ENCODE measurements at regions of chr6 and their contacts with region 1.

Region 1: GRCh38 chr6:27132532-27133280 is 114.8 kb upstream of the PRSS16 start:
- DNase-seq: peak; percentile 99
- ATAC-seq: peak; percentile 72
- H3K4me3 ChIP-seq: peak overlapping the region; percentile 82
- H3K27ac ChIP-seq: peak overlapping the region; percentile 95
- H3K4me1 ChIP-seq: peaks cover 32% of the 10 kb centered on the region
- H3K27me3 ChIP-seq: no peaks in the 10 kb centered on the region
- CTCF ChIP-seq: no peak

Region 2: DNA sequence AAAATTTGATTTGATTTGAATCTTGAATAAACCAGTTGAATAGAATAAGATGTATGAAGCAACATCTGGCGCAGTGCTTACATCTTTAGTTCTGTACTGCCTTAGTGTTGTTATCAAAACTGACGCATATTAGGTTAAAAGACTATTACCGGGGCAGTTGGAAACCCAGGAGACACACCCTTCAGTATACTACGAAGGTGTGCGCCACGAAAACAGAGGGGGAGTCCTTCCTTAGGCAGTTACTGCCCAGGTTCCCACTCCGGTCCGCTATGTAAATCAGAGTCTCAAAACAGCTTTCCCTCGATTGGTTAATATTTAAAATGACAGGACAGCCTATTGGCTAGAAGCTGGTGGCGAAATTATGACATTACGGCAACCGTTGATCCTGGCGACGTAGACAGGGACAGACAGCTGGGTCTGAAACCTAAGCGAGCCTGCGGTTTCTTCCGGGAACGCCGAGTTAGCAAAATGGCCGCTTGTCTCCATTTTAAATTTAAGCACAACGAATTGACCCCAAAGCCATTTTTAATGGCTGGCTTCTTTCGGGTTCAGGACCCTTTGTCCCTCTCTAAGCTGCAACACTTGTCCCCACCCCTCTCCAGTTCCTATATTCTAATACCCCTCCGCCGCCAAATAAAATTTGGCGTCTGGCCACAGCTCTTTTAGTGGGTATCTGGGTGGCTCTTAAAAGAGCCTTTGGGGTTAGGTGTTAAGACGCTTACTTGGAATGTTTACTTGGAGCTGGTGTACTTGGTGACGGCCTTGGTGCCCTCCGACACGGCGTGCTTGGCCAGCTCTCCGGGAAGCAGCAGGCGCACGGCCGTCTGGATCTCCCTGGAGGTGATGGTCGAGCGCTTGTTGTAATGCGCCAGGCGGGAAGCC is 1009.7 kb before region 1 on chr6:
- CTCF ChIA-PET with region 1: no interaction called
- POLR2A ChIA-PET with region 1: interaction called, 3 read pairs
- intact Hi-C with region 1: loop called (anchors 2 kb)
- DNase-seq: peak; percentile 99
- ATAC-seq: peak; percentile 50
- H3K4me3 ChIP-seq: peak overlapping the region; percentile 96
- H3K27ac ChIP-seq: peak overlapping the region; percentile 94
- H3K4me1 ChIP-seq: peaks cover 49% of the 10 kb centered on the region
- H3K27me3 ChIP-seq: no peaks in the 10 kb centered on the region
- CTCF ChIP-seq: no peak

Region 3: DNA sequence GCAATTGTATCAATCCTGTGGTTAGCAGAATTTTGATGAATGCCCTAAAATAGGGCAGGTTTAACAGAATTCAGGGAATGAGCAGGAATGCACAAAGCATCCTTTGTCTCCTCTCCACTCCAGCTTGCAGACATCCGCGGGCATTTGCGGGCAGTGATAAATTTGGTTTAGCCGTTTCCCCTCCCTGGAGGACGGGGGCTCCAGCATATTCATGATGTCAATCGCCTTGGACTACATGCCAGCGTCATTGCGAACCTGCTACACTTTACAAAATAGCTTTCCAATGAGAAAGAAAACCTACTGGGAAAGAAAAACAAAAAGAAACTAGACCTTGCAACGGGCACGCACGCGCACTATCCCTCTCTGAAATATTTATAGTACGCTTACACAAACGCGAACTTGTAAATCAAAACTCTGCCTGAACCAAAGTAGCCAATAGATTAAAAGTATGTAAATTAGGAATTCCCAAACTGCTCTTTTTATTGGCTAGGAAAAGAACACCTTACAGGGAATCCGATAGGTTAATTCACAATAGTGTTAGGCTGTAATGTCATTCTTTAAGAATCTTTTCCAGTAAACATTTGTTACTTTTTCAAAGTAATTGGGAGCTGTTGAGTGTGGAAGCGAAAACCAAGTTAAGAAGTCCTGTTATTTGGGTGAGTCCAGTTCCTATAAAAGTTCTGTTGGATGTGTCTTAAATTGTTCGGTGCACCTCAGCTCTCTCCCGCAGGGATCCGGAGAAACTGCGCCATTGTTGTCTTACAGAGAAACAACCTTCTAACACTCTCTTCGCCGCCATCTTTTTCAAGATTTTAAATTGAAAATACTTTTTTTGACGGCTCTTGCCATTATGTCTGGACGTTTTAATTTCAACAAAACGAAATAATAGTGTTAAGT is 908.8 kb before region 1 on chr6:
- CTCF ChIA-PET with region 1: no interaction called
- POLR2A ChIA-PET with region 1: no interaction called
- intact Hi-C with region 1: loop called (anchors 5 kb)
- DNase-seq: peak; percentile 93
- ATAC-seq: peak; percentile 85
- H3K4me3 ChIP-seq: peak overlapping the region; percentile 83
- H3K27ac ChIP-seq: peak overlapping the region; percentile 91
- H3K4me1 ChIP-seq: peaks cover 23% of the 10 kb centered on the region
- H3K27me3 ChIP-seq: no peaks in the 10 kb centered on the region
- CTCF ChIP-seq: no peak

Region 4: DNA sequence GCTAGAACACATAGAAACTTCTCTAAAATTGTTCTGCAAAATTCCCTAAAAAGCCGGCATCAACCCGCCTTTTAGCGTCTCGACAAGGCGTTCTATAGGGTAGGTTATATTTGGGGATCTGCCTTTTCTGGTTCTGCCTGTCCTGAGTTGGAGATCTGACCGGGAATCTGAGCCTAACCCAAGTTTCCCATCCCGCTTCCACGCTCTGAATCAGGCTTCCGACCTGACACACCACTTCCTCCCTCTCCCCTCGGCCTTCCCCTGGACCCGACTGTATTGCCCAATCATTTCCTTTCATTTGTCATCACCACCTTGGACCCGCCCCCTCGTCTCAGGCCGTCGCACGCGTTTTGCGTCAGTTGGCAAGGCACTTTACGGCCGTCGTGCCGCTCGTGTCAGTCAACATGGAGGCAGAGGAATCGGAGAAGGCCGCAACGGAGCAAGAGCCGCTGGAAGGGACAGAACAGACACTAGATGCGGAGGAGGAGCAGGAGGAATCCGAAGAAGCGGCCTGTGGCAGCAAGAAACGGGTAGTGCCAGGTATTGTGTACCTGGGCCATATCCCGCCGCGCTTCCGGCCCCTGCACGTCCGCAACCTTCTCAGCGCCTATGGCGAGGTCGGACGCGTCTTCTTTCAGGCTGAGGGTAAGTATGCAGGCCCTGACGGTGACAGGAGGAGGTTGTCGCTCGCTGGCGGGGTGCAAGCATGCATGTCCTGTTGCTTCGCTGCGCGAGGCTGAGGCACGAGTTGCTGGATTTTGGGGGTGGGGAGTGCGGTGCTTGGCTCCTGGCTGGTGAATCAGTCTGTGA is 535.9 kb before region 1 on chr6 and contains the start of gene ABT1:
- CTCF ChIA-PET with region 1: no interaction called
- POLR2A ChIA-PET with region 1: no interaction called
- intact Hi-C with region 1: loop called (anchors 5 kb)
- DNase-seq: peak; percentile 98
- ATAC-seq: peak; percentile 91
- H3K4me3 ChIP-seq: peak within 1 kb of the TSS; percentile 99
- H3K27ac ChIP-seq: peak within 1 kb of the TSS; percentile 69
- H3K4me1 ChIP-seq: peaks cover 10% of the 10 kb centered on the region; the same call in 1 of the 2 replicates
- H3K27me3 ChIP-seq: no peaks in the 10 kb centered on the region
- CTCF ChIP-seq: no peak
- total RNA-seq, gene ABT1: 26.9 and 33.7 TPM in 2 replicates

Region 5: GRCh38 chr6:27157459-27158315 is 25.0 kb after region 1 on chr6:
- CTCF ChIA-PET with region 1: no interaction called
- POLR2A ChIA-PET with region 1: no interaction called
- intact Hi-C with region 1: loop called (anchors 1 kb)
- DNase-seq: peak; percentile 87
- ATAC-seq: peak; percentile 75
- H3K4me3 ChIP-seq: peak overlapping the region; percentile 81
- H3K27ac ChIP-seq: no peak overlapping the region
- H3K4me1 ChIP-seq: peaks cover 10% of the 10 kb centered on the region
- H3K27me3 ChIP-seq: no peaks in the 10 kb centered on the region
- CTCF ChIP-seq: peak; percentile 47; the same call in 1 of the 2 replicates

Region 6: GRCh38 chr6:27893059-27893835 is 760.5 kb after region 1 on chr6:
- CTCF ChIA-PET with region 1: no interaction called
- POLR2A ChIA-PET with region 1: interaction called, 3 read pairs
- intact Hi-C with region 1: loop called (anchors 5 kb)
- DNase-seq: peak; percentile 98
- ATAC-seq: peak; percentile 68
- H3K4me3 ChIP-seq: peak overlapping the region; percentile 83
- H3K27ac ChIP-seq: peak overlapping the region; percentile 85
- H3K4me1 ChIP-seq: peaks cover 10% of the 10 kb centered on the region; the same call in 1 of the 2 replicates
- H3K27me3 ChIP-seq: no peaks in the 10 kb centered on the region
- CTCF ChIP-seq: no peak